ENCODE measurements at regions of chr1 and their contacts with region 1.

Region 1: GRCh38 chr1:233364695-233365539 is 37.4 kb downstream of the MAP3K21 start:
- H3K4me3 ChIP-seq: no peak overlapping the region
- H3K27ac ChIP-seq: no peak overlapping the region
- H3K4me1 ChIP-seq: peaks cover 16% of the 10 kb centered on the region
- CTCF ChIP-seq: peak; percentile 43; the same call in 1 of the 2 replicates

Region 2: GRCh38 chr1:233261206-233261605 is 103.7 kb before region 1 on chr1:
- CTCF ChIA-PET with region 1: no interaction called
- POLR2A ChIA-PET with region 1: no interaction called
- H3K4me3 ChIP-seq: no peak overlapping the region
- H3K27ac ChIP-seq: no peak overlapping the region
- H3K4me1 ChIP-seq: 0 out of 2 replicates have a peak, but pooled peaks cover 5% of the 10 kb centered on the region
- CTCF ChIP-seq: no peak

Region 3: DNA sequence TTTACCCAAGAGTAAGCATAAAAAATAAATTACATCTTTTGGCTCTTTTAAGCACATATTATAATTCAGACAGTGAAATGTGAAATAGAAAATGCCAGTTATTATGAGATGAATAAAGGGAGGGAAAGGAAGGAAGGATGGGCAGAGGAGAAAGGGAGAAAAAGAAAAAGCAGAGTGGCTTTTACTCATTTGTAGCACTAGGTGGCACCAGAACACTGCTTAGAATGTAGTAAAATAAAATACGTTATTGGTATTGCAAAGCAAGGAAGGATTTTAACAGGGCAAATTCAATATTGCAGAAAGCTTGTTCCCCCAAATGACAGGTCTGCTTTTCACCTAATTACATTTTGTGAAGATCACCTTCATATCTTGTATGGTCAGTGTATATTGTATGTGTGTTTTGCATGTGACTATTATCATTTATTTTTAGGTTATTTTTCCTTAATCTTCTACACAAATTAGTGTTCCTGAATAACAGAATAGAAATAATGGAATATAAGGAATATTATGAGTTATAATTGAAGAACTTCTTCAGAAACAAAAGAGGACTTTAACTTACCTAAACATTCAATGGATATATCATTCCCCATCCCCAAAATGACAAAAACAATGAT is 60.3 kb before region 1 on chr1:
- CTCF ChIA-PET with region 1: interaction called, 21 read pairs
- POLR2A ChIA-PET with region 1: no interaction called
- H3K4me3 ChIP-seq: no peak overlapping the region
- H3K27ac ChIP-seq: no peak overlapping the region
- H3K4me1 ChIP-seq: no peaks in the 10 kb centered on the region
- CTCF ChIP-seq: peak; percentile 92

Region 4: DNA sequence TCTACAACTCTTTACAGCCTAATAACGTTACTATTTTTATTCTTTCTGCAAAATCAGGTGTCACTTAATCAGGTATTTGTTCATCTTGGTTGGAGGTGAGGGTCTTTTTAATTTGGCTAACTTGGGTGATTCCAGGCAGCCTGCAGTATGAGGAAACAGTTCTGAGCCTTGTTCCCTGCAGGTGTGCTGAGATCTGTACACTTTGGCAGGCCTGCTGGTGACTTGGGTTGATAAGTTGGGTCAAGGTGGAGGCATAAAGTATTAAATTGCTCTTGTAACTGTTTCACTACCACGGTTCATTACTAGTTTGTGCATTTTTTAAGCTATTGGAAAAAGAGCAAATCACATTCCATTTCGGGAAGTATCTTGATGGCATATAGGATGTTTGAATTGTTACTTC is 27.4 kb before region 1 on chr1:
- CTCF ChIA-PET with region 1: interaction called, 11 read pairs
- POLR2A ChIA-PET with region 1: no interaction called
- H3K4me3 ChIP-seq: no peak overlapping the region
- H3K27ac ChIP-seq: no peak overlapping the region
- H3K4me1 ChIP-seq: peaks cover 37% of the 10 kb centered on the region
- CTCF ChIP-seq: no peak

Region 5: GRCh38 chr1:233343262-233343661 is 21.7 kb before region 1 on chr1:
- CTCF ChIA-PET with region 1: interaction called, 11 read pairs
- POLR2A ChIA-PET with region 1: no interaction called
- H3K4me3 ChIP-seq: no peak overlapping the region
- H3K27ac ChIP-seq: no peak overlapping the region
- H3K4me1 ChIP-seq: peaks cover 15% of the 10 kb centered on the region
- CTCF ChIP-seq: no peak

Region 6: GRCh38 chr1:233349137-233349536 is 15.8 kb before region 1 on chr1:
- CTCF ChIA-PET with region 1: interaction called, 31 read pairs
- POLR2A ChIA-PET with region 1: no interaction called
- H3K4me3 ChIP-seq: no peak overlapping the region
- H3K27ac ChIP-seq: no peak overlapping the region
- H3K4me1 ChIP-seq: peaks cover 7% of the 10 kb centered on the region
- CTCF ChIP-seq: no peak

Region 7: GRCh38 chr1:233376382-233377110 is 11.6 kb after region 1 on chr1:
- CTCF ChIA-PET with region 1: interaction called, 21 read pairs
- POLR2A ChIA-PET with region 1: interaction called, 3 read pairs
- H3K4me3 ChIP-seq: no peak overlapping the region
- H3K27ac ChIP-seq: no peak overlapping the region
- H3K4me1 ChIP-seq: no peaks in the 10 kb centered on the region
- CTCF ChIP-seq: no peak

Region 8: DNA sequence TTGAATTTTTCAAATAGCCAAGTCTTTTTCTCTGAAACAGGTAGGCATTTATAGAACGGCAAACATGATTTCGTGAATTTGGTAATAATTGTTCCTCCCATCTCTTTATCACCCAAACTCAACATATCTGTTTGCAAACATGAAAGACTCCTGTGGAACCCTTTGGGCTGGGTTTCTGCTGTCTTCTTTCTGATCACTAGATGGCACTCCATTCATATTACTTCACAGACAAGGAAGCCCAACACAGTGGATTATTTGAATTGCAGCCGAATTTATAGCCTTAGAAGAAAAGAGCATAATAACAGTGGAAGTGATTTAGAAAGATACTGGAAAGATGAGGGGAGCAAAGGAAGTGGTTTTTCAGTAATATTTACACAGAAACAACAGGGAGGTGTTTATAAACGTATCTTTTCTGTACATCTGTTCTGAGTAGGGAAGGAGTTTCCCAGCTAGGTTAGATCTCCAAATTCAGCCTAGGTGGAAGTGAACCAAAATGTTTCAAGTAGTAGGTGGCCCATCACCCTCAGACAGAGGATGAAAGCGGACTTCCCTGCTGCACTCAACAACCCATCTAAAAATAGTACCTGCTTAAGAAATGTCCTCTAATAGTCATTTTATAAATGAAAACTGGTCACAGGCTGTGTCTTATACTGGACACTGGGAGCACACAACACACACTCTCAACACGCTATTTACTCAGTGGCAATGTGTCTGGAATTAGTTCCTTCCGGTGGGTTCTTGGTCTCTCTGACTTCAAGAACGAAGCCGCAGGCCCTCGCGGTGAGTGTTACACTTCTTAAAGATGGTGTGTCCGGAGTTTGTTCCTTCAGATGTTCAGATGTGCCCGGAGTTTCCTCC is 30.2 kb after region 1 on chr1:
- CTCF ChIA-PET with region 1: interaction called, 18 read pairs
- POLR2A ChIA-PET with region 1: no interaction called
- H3K4me3 ChIP-seq: no peak overlapping the region
- H3K27ac ChIP-seq: no peak overlapping the region
- H3K4me1 ChIP-seq: no peaks in the 10 kb centered on the region
- CTCF ChIP-seq: peak; percentile 80